Aorta (tissue), 5 donors: ENCODE measurements at regions of chr4 and their contacts with region 1.

Region 1: DNA sequence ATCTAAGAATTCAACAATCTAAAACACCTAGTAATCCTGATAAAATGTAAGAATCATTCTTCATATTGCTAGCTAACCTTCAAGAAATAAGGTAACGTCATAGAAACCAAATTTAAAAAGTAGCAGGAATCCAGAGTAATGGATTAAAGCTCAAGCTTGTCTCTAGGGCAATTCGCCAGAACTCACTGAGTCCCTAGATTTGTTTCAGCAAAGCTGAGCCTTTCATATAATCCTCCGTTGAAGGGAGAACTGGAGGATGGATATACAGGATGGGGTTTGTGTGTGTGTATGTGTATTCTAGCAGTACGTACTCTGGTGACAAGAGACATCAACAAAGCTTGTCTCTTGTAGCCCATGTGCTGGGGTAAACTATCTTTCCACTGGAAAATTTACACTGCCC is 2173.5 kb upstream of the AGA start:
- DNase-seq: no peak
- ATAC-seq: no peak
- H3K4me3 ChIP-seq: no peak overlapping the region
- H3K27ac ChIP-seq: no peak overlapping the region
- H3K4me1 ChIP-seq: no peaks in the 10 kb centered on the region
- H3K27me3 ChIP-seq: no peaks in the 10 kb centered on the region

Region 2: DNA sequence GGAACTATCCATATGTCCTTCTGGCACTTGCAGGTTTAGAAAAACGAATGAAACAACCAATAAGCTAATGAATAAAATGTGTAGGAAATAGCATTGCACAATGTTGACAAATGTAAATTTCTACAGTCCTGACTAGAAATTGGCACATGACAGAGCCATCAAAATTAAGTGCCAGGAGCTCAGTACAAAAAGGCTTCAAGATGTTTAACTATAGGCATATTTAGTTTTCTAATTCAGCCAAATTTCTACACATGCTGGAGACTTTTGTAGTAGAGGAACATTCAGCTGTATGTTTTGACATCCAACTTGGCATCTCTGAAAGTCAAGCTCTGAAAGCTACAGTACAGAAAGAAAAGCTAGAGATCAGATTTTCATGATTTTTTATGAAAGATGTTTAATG is 174.1 kb before region 1 on chr4:
- intact Hi-C with region 1: no loop called
- DNase-seq: no peak
- ATAC-seq: no peak
- H3K4me3 ChIP-seq: no peak overlapping the region
- H3K27ac ChIP-seq: no peak overlapping the region
- H3K4me1 ChIP-seq: no peaks in the 10 kb centered on the region
- H3K27me3 ChIP-seq: no peaks in the 10 kb centered on the region

Region 3: DNA sequence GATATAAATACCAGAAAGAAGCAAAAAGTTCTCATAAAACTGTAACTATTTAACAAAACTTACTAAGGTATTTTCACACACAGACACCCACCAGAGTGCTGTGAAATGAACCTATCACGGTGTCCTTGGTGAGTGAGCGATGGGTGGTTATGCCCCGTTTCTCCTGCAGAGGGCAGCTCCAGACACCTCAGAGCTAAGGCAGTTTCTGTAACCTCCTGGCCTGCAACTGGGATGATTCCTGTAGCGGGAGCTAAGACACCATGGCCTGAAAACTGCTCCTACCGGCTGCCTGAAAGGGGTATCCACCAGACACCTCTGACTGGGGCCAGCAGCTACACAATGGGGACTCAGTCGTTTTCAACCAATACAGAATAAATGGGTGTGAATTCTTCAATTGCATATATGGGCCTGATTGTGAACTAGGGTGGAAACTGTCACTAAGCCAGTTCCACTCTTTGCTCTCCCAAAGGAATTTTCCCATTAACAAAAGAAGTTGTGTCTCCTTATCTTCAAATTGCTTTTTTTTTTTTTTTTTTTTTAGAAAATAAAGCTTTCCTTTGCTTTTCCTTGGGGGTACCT is 251.7 kb after region 1 on chr4:
- intact Hi-C with region 1: loop called in 1 of 2 experiments (anchors 5 kb)
- DNase-seq: peak in 1 of 2 donors; percentile 42
- ATAC-seq: no peak
- H3K4me3 ChIP-seq: no peak overlapping the region
- H3K27ac ChIP-seq: no peak overlapping the region
- H3K4me1 ChIP-seq: no peaks in the 10 kb centered on the region
- H3K27me3 ChIP-seq: no peaks in the 10 kb centered on the region